Sciatic nerve (tissue), 2 donors: ENCODE measurements at regions of chr9 and their contacts with region 1.

Region 1: GRCh38 chr9:73183917-73184861 is 32.5 kb downstream of the ANXA1 start:
- DNase-seq: no peak
- ATAC-seq: peak; percentile 55

Region 2: DNA sequence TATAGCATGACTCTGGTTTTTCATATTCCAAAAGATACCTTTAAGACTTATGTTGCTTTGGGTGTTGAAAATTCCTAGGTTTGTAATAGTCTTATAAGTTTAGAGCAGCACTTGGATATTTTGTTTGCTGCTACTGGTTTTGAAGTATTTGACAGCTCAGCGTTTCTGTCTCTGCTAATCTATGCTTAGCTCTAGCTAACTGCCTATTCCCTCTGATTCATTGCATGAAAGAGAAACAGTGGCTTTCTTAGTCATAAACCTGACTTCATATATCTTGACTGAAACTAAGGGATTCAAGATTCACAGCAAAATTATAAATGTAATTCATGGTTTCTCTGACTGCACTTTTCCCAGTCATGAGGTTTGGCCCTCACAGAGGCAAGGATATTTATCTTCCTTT is 68.2 kb before region 1 on chr9:
- intact Hi-C with region 1: loop called (anchors 10 kb)
- DNase-seq: no peak
- ATAC-seq: no peak

Region 3: DNA sequence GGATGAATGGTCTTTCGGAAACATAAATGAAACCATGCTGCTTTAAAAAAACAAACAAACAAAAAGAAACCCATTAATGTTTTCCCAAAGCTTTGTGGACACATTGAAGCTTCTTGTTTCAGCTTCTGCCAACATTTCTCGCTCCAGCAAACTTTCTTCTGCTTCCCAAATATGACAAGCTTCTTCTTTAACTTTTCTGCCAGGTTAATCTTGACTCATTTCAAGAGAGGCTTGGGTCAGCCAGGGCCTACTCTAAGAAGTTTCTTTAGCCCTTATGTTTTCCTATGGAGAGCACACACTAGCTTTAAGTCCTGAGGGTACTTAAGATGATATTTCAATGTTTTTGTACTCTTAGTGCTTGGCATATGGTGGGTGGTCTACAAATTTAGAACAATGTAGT is 26.4 kb before region 1 on chr9:
- intact Hi-C with region 1: loop called (anchors 2 kb)
- DNase-seq: no peak
- ATAC-seq: no peak